AG04450 (cell line): ENCODE measurements at regions of chr15 and their contacts with region 1.

Region 1: DNA sequence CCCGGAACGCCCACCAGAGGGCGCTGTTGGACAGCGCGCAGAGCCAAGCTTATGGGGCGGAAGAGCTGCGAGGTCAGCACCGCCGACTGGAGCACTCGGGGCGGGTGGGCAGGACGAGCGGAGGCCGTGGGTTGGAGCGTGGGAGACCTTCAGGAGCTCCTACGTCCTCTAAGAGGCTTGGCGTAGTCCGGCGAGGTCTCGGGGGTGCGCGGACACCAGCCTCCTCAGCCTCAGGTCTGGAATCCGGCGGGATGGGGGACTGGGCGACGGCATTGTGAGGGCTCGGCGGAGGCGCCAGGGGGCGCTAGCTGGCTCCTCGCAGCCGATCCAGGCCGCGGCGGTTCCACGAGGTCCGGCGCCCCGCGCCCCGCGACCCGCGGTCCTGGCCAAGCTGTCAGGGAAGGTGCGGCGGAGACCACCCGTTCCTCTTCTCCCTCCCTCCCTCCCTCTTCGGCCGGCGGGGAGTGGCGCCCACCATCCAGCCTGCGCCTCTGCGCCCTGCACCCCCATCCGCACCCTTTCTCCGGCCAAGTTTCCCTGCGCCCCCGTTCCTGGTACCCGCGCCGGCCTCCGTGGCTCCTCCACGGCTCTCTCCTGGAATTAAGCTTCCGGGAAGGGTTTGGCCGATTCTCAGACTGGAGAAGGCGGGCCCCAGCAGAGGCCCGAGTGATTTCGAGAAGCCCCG is 24.3 kb upstream of the POLG start:
- DNase-seq: peak; percentile 34
- H3K4me3 ChIP-seq: peak overlapping the region; percentile 64
- H3K27ac ChIP-seq: no peak overlapping the region
- H3K27me3 ChIP-seq: peaks cover 73% of the 10 kb centered on the region
- CTCF ChIP-seq: peak; percentile 80

Region 2: GRCh38 chr15:89206908-89207331 is 152.0 kb before region 1 on chr15:
- CTCF ChIA-PET with region 1: interaction called, 16 read pairs
- POLR2A ChIA-PET with region 1: no interaction called
- DNase-seq: peak; percentile 16
- H3K4me3 ChIP-seq: peak overlapping the region; percentile 41
- H3K27ac ChIP-seq: no peak overlapping the region
- H3K27me3 ChIP-seq: no peaks in the 10 kb centered on the region
- CTCF ChIP-seq: peak; percentile 97

Region 3: DNA sequence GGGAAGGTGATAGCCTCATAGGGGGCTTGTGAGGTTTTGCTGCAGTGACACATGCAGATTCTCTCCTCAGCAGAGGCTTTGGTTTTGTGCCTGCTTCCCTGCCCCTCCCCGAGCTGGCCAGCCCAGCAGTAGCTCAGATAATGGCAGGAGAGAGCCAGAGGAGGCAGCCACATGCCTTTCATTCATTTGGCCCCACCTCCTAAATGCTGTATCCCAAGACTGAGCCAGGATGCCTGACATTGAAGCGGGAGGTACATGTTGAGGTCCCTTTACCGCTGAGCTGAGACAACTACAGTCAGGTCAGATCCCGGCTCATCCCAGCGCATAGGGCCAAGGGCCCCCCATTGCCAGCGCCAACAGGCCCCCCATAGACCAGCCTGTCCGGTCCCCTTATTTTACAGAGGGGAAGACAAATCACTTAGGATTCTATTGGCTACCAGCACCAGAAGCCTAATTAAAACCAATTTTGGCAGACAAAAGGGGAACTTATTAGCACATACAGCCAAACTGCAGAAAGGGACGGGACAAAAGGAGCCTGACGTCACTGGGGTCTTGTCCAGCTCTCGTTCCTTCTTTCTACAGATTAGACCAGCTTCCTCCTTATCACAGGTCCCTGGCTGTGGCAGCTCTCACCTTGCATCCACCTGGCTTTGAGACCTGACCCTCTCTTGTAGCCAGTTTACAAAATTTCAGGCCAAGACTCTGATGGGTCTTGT is 12.2 kb before region 1 on chr15:
- CTCF ChIA-PET with region 1: interaction called, 72 read pairs
- POLR2A ChIA-PET with region 1: no interaction called
- DNase-seq: no peak
- H3K4me3 ChIP-seq: no peak overlapping the region
- H3K27ac ChIP-seq: no peak overlapping the region
- H3K27me3 ChIP-seq: peaks cover 41% of the 10 kb centered on the region
- CTCF ChIP-seq: no peak

Region 4: GRCh38 chr15:89389841-89390603 is 31.1 kb after region 1 on chr15:
- CTCF ChIA-PET with region 1: interaction called, 30 read pairs
- POLR2A ChIA-PET with region 1: no interaction called
- DNase-seq: no peak
- H3K4me3 ChIP-seq: no peak overlapping the region
- H3K27ac ChIP-seq: no peak overlapping the region
- H3K27me3 ChIP-seq: peaks cover 59% of the 10 kb centered on the region
- CTCF ChIP-seq: no peak

Region 5: GRCh38 chr15:89430530-89431341 is 71.8 kb after region 1 on chr15:
- CTCF ChIA-PET with region 1: interaction called, 263 read pairs
- POLR2A ChIA-PET with region 1: interaction called, 6 read pairs
- DNase-seq: peak; percentile 6
- H3K4me3 ChIP-seq: peak overlapping the region; percentile 58
- H3K27ac ChIP-seq: no peak overlapping the region
- H3K27me3 ChIP-seq: peaks cover 42% of the 10 kb centered on the region
- CTCF ChIP-seq: peak; percentile 96

Region 6: DNA sequence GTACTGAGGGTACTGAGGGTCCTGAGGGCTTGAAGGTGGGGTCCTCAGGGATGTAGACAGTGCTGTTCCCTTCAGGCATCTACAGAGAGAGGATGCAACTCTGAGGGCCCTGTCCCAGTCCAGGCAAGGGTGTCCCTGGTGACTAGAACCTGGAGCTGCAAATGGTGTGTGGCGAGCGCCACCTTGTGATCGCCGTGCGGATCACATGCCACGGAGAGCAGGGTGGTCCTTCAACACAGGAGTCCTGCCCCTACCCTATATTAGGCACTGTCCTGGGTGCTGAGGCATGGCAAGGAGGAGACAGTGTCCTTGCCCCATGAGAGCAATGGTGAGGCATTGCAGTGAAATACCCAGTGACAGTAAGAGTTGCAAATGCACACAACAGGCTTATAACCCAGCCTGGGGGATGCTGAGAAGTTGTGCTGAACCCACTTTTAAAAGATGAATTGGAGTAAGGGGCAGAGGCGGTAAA is 113.9 kb after region 1 on chr15:
- CTCF ChIA-PET with region 1: interaction called, 52 read pairs
- POLR2A ChIA-PET with region 1: no interaction called
- DNase-seq: peak; percentile 1
- H3K4me3 ChIP-seq: no peak overlapping the region
- H3K27ac ChIP-seq: no peak overlapping the region
- H3K27me3 ChIP-seq: peaks cover 25% of the 10 kb centered on the region
- CTCF ChIP-seq: peak; percentile 67